Gastrocnemius medialis (tissue), 4 donors: ENCODE measurements at regions of chr1 and their contacts with region 1.

Region 1: GRCh38 chr1:203273206-203273868 is 32.0 kb upstream of the BTG2 start:
- DNase-seq: peak; percentile 72 to 86
- ATAC-seq: peak; percentile 33 to 42
- H3K4me3 ChIP-seq: peak overlapping the region; percentile 31 to 43 (median 38)
- H3K27ac ChIP-seq: peak overlapping the region; percentile 92 to 96 (median 94)
- H3K4me1 ChIP-seq: peaks cover 82 to 83% of the 10 kb centered on the region in 2 donors
- H3K27me3 ChIP-seq: no peaks in the 10 kb centered on the region
- CTCF ChIP-seq: peak; percentile 99 to 100 (median 100)
- POLR2A ChIP-seq: peak; percentile 23 to 52

Region 2: DNA sequence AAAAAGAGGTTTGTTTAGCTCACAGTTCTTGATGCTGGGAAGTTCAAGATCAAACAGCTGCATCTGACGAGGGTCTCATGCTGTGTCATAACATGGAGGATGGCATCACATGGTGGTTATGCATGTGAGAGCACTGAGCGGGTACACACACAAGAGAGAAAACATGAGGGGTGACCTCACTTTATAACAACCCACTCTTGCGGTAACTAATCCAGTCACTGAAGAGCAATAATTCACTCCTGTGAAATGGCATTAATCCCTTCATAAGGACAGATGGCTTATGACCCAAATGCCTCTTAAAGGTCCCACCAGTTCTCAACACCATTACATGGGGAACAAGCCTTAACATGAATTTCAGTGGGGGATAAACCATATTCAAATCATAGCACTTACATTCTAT is 20.7 kb before region 1 on chr1:
- in situ Hi-C with region 1: no loop called
- intact Hi-C with region 1: no loop called
- DNase-seq: no peak
- ATAC-seq: no peak
- H3K4me3 ChIP-seq: no peak overlapping the region
- H3K27ac ChIP-seq: no peak overlapping the region
- H3K4me1 ChIP-seq: no peaks in the 10 kb centered on the region
- H3K27me3 ChIP-seq: peaks cover 0 to 7% (median 3%) of the 10 kb centered on the region in 3 donors
- CTCF ChIP-seq: no peak
- POLR2A ChIP-seq: no peak

Region 3: GRCh38 chr1:203304919-203305808 is 31.8 kb after region 1 on chr1 and contains the start of gene BTG2:
- in situ Hi-C with region 1: no loop called
- intact Hi-C with region 1: loop called (anchors 1 kb)
- DNase-seq: peak; percentile 90 to 93
- ATAC-seq: peak; percentile 68 to 79
- H3K4me3 ChIP-seq: peak within 1 kb of the TSS; percentile 80 to 98 (median 94)
- H3K27ac ChIP-seq: peak within 1 kb of the TSS; percentile 95 to 100 (median 98)
- H3K4me1 ChIP-seq: peaks cover 27 to 28% of the 10 kb centered on the region in 2 donors
- H3K27me3 ChIP-seq: no peaks in the 10 kb centered on the region
- CTCF ChIP-seq: no peak
- POLR2A ChIP-seq: peak; percentile 100
- total RNA-seq, gene BTG2: 48.0 to 286 (median 74.9) TPM

Region 4: GRCh38 chr1:203340112-203340804 is 66.9 kb after region 1 on chr1:
- in situ Hi-C with region 1: loop called in 3 of 4 experiments (anchors 5 kb)
- intact Hi-C with region 1: loop called (anchors 1 kb)
- DNase-seq: peak; percentile 63 to 67
- ATAC-seq: peak; percentile 53 to 65
- H3K4me3 ChIP-seq: no peak overlapping the region
- H3K27ac ChIP-seq: peak overlapping the region; percentile 0 to 71 (median 26)
- H3K4me1 ChIP-seq: peaks cover 28 to 37% of the 10 kb centered on the region in 2 donors
- H3K27me3 ChIP-seq: no peaks in the 10 kb centered on the region
- CTCF ChIP-seq: peak; percentile 71 to 89 (median 87)
- POLR2A ChIP-seq: no peak

Region 5: GRCh38 chr1:203486618-203487370 is 213.5 kb after region 1 on chr1:
- in situ Hi-C with region 1: loop called (anchors 5 to 10 kb)
- intact Hi-C with region 1: no loop called
- DNase-seq: no peak
- ATAC-seq: peak; percentile 26 to 32
- H3K4me3 ChIP-seq: peak overlapping the region; percentile 33 to 87 (median 56)
- H3K27ac ChIP-seq: peak overlapping the region; percentile 60 to 75 (median 70)
- H3K4me1 ChIP-seq: no peaks in the 10 kb centered on the region
- H3K27me3 ChIP-seq: no peaks in the 10 kb centered on the region
- CTCF ChIP-seq: no peak
- POLR2A ChIP-seq: no peak

Region 6: GRCh38 chr1:203625628-203626019 is 352.3 kb after region 1 on chr1:
- in situ Hi-C with region 1: no loop called
- intact Hi-C with region 1: loop called (anchors 10 kb)
- DNase-seq: no peak
- ATAC-seq: no peak
- H3K4me3 ChIP-seq: peak overlapping the region in 2 of 4 donors; percentile 69 to 78
- H3K27ac ChIP-seq: peak overlapping the region; percentile 80 to 84 (median 82)
- H3K4me1 ChIP-seq: peaks cover 23 to 40% of the 10 kb centered on the region in 2 donors
- H3K27me3 ChIP-seq: no peaks in the 10 kb centered on the region
- CTCF ChIP-seq: no peak
- POLR2A ChIP-seq: no peak